Left cardiac atrium (tissue), 4 donors: ENCODE measurements at regions of chr17 and their contacts with region 1.

Region 1: DNA sequence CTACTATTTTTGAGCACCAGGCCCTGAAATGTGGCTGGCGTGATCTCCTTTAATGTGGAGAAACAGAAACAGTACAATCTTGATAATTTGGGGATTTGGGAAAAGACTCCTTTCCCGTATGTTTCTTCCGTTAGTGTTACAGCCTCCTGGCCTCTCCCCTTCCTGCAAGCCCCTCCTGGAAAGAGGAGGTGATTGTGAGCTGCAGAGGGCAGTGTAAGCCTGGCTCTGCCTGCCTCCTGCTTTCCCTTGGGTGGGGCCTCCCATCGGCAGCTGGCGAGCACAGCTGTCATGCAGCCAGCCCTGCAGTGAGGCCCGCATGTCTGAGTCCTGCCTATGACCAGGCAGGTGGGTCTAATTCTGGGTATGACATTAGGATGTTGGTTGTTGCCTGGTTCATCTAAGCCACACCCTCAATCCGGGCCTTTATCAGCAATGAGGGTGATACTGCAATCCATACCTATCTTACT is 48.7 kb upstream of the WSB1 start:
- DNase-seq: peak; percentile 91
- ATAC-seq: peak; percentile 92 to 93

Region 2: GRCh38 chr17:27049104-27049784 is 196.0 kb before region 1 on chr17:
- intact Hi-C with region 1: no loop called
- DNase-seq: no peak
- ATAC-seq: no peak

Region 3: DNA sequence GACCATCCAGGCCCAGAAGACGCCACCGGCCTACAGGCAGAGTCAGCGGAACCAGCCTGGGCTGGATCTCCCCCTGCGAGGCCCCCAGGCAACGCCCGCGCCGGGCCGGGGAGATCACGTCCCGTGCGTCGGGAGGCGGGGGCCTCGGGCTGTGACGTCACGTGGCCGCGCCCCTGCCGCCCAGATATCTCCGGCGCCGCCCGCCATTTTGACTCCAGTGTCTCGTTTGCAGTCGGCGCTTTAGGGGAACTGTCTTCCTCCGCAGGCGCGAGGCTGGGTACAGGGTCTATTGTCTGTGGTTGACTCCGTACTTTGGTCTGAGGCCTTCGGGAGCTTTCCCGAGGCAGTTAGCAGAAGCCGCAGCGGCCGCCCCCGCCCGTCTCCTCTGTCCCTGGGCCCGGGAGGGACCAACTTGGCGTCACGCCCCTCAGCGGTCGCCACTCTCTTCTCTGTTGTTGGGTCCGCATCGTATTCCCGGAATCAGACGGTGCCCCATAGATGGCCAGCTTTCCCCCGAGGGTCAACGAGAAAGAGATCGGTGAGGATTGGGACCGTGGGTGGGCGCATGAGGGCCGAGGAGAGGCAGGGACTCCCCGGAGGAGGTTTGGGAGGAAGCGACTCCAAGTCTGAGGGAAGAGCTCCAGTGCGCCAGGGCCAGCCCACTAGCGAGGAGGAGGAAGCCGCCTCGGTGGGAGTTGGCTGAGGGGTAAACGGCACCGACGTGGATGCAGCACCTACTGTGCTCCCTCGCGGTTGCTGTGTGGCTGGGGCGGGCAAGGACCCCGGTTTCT is 48.8 kb after region 1 on chr17 and contains the start of gene WSB1:
- intact Hi-C with region 1: loop called (anchors 2 to 5 kb)
- DNase-seq: peak; percentile 95
- ATAC-seq: peak; percentile 96 to 97
- total RNA-seq, gene WSB1: 69.3 to 119 TPM

Region 4: DNA sequence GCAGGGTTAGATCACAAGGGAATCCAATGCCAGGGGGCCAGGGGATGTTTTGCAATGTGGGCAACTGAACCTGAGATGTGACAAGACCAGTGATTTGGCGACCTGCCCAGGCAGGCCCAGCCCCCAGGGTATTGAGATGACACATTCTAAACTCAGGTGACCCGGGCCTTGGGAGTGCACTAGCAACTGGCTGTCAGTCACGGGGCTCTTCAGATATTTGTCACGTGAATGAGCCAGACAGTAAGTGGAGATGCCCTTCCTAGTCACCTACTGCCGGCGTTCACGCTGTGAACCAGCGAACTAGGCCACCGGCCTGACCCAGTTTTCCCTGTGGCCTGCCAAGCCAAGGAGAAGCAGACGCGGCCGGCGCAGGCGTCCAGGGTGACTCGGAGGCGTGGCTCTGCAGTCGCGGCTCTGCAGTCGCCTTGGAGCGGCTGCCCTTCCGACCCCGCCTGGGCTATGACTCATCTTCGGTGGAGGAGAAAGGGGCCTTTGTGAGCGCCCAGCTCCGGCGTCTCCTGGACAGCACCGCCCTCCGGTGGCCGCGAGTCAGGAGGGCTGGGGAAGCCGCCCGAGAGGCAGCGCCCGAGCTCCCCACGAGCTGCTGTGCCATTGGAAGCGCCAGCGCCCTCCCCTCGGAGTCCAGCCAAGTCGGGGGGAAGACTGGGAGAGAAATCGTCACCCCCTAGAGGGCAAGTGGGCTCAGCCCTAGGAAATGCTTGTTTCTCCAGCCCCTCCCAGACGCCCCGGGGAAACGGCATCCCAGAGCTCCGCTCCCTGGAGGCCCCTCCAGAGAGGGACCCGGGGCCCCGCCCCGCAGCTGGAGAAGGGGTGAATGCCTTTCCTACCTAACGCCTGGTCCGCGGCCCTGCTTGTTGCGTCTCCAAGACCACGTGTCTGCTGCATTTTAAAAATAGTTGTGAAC is 87.5 kb after region 1 on chr17:
- intact Hi-C with region 1: loop called (anchors 1 to 5 kb)
- DNase-seq: peak; percentile 99
- ATAC-seq: peak; percentile 97

Region 5: DNA sequence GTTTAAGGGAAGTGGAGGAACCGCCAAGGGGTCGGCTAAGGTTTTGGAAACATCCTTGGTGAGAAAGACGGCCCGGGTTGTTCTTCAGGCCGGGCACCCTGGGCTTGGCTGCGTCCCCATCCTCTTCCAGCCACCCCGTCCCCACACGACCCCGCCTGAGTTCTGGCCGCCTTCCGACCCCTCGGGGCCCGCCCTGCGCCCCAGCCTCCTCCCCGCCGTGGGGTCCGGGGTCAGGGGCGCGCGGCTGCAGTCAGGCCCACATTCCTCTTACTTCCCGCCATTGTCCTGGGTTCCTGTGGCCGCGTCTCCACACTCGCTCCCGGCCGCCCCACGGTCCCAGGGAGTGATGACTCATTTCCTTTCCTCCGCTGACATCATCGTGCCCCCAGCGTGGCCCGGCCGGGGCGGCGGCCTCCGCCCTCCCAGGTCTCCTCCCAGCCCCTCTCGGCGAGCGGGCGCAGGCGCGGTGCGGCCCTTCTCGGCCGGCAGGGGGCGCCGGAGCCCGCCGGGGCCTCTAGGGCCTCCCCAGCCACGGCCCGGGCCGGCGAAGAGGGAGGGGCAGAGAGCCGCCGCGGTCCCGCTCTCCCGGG is 108.3 kb after region 1 on chr17:
- intact Hi-C with region 1: loop called in 1 of 2 experiments (anchors 2 kb)
- DNase-seq: peak; percentile 94
- ATAC-seq: peak; percentile 92 to 94